Activated T-helper 2 cell treated with anti-CD3 and anti-CD28 coated beads, Interferon-gamma antibody, Interleukin-2, Interleukin-4, amounts not matched to agents 10 μg/mL and 5 μg/mL and 100 μg/mL, durations not matched to agents 14 hours and 24 hours and 36 hours (primary cell): ENCODE measurements at regions of chr16 and their contacts with region 1.

Region 1: DNA sequence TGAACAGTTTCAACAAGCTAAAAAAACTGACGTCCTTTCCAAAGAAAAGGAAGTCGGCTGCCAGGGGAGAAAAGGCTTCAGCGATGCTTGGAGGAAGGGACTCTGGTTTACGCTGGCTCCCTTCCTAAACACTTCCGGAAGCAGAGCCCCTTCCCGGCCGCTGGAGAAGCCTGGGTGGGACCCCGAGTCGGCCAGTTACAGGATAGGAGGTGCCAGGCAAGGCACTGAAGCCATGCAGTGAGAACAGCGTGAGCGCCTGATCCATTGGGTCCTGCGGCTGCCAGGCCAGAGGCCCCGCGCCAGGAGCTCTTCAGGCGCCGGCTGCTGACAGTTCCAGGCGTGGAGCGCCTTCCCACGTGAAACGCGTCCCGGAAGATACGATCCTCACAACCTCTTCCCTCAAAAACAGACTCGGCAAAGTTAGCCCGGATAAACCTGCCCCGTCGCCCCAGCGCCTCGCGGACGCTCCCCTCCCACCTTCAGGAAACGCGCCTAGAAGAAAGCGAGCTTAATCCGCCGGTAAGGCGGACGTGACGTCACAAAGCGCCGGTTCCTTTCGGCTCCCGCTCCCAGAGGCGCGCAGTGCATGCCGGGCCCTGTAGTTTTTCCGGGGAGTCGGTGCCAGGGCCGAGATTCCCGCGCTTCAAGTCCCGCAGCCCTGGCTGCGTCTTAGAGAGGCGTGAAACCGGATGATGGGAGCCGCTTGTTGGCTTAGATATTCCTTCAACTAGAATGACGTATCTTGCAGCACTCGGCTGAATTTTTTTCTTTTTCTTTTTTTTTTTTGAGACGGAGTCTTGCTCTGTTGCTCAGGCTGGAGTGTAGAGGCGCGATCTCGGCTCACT is at the start of gene ADAT1:
- DNase-seq: peak; percentile 96
- H3K4me3 Mint-ChIP-seq: peak within 1 kb of the TSS; percentile 93
- H3K27ac Mint-ChIP-seq: peak within 1 kb of the TSS; percentile 96
- H3K4me1 Mint-ChIP-seq: peaks cover 36% of the 10 kb centered on the region
- H3K27me3 Mint-ChIP-seq: no peaks in the 10 kb centered on the region
- total RNA-seq, gene ADAT1: 45.3 and 54.0 TPM in 2 replicates

Region 2: GRCh38 chr16:75432828-75433731 is 189.9 kb before region 1 on chr16 and contains the start of gene CFDP1:
- intact Hi-C with region 1: loop called (anchors 1 kb)
- DNase-seq: peak; percentile 93
- H3K4me3 Mint-ChIP-seq: peak within 1 kb of the TSS; percentile 87
- H3K27ac Mint-ChIP-seq: peak within 1 kb of the TSS; percentile 94
- H3K4me1 Mint-ChIP-seq: peaks cover 16% of the 10 kb centered on the region
- H3K27me3 Mint-ChIP-seq: no peaks in the 10 kb centered on the region
- total RNA-seq, gene CFDP1: 33.5 and 37.5 TPM in 2 replicates

Region 3: DNA sequence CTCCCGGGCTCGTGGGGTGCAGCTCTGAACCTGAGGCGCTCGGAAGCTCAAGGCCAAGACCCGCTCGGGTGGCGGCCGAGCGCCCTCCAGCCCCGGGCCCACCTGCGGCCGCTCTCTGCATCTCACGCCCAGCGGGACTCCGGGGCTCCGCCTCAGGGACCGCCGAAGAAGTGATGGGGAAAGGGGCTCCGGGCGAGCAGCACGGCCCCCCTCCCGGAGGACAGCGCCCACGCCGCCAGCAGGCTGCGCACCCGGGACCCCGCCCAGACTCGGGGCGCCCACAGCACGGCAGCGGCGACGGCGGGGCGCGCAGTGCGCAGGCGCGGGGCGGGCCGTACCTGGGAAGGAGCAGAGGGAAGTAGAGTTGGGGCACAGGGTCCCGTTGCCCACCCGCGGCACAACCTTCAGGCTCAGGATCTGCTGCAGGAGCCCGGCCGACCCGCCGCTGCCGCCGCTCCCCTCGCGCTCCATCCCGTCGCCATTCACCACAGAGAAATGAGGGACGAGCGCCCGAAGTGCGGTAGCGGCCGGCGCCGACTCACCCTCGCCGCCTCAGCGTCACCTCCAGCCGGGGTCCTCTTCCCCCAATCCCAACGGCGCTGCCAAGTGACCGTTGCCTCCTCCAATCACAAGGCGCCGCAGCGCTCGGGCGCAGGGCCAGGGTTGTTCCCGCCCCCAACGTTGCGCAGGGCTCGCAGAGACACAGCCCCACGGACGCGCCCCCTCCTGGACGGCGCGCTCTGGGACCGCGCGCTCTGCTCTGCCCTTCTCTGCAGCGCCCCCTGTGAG is 158.7 kb before region 1 on chr16 and contains the start of gene TMEM170A:
- intact Hi-C with region 1: loop called (anchors 2 kb)
- DNase-seq: peak; percentile 98
- H3K4me3 Mint-ChIP-seq: peak within 1 kb of the TSS; percentile 91
- H3K27ac Mint-ChIP-seq: peak within 1 kb of the TSS; percentile 89
- H3K4me1 Mint-ChIP-seq: peaks cover 36% of the 10 kb centered on the region
- H3K27me3 Mint-ChIP-seq: peaks cover 2% of the 10 kb centered on the region
- total RNA-seq, gene TMEM170A: 35.6 and 39.9 TPM in 2 replicates

Region 4: GRCh38 chr16:75495076-75495674 is 127.8 kb before region 1 on chr16 and contains the start of gene CHST6:
- intact Hi-C with region 1: no loop called
- DNase-seq: no peak
- H3K4me3 Mint-ChIP-seq: no peak within 1 kb of the TSS
- H3K27ac Mint-ChIP-seq: no peak within 1 kb of the TSS
- H3K4me1 Mint-ChIP-seq: peaks cover 2% of the 10 kb centered on the region
- H3K27me3 Mint-ChIP-seq: peaks cover 32% of the 10 kb centered on the region
- total RNA-seq, gene CHST6: not detected in 2 replicates

Region 5: GRCh38 chr16:75506107-75506506 is 116.9 kb before region 1 on chr16:
- intact Hi-C with region 1: no loop called
- DNase-seq: no peak
- H3K4me3 Mint-ChIP-seq: no peak overlapping the region
- H3K27ac Mint-ChIP-seq: no peak overlapping the region
- H3K4me1 Mint-ChIP-seq: peaks cover 3% of the 10 kb centered on the region
- H3K27me3 Mint-ChIP-seq: peaks cover 7% of the 10 kb centered on the region

Region 6: DNA sequence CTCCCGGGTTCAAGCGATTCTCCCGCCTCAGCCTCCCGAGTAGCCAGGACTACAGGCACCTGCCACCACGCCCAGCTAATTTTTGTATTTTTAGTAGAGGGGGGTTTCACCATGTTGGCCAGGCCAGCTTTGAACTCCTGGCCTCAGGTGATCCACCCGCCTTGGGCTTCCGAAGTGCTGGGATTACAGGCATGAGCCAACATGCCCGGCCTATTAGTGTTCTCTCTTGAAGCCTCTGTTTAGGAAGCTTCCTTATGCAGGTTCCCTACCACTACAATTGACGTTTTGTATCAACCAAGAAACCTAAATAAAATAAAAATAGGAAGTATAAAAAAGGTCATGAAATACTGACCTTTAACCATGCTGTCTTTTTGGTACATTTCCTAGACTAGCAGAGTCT is 103.1 kb before region 1 on chr16:
- intact Hi-C with region 1: loop called (anchors 2 kb)
- DNase-seq: no peak
- H3K4me3 Mint-ChIP-seq: no peak overlapping the region
- H3K27ac Mint-ChIP-seq: no peak overlapping the region
- H3K4me1 Mint-ChIP-seq: peaks cover 7% of the 10 kb centered on the region
- H3K27me3 Mint-ChIP-seq: peaks cover 7% of the 10 kb centered on the region

Region 7: DNA sequence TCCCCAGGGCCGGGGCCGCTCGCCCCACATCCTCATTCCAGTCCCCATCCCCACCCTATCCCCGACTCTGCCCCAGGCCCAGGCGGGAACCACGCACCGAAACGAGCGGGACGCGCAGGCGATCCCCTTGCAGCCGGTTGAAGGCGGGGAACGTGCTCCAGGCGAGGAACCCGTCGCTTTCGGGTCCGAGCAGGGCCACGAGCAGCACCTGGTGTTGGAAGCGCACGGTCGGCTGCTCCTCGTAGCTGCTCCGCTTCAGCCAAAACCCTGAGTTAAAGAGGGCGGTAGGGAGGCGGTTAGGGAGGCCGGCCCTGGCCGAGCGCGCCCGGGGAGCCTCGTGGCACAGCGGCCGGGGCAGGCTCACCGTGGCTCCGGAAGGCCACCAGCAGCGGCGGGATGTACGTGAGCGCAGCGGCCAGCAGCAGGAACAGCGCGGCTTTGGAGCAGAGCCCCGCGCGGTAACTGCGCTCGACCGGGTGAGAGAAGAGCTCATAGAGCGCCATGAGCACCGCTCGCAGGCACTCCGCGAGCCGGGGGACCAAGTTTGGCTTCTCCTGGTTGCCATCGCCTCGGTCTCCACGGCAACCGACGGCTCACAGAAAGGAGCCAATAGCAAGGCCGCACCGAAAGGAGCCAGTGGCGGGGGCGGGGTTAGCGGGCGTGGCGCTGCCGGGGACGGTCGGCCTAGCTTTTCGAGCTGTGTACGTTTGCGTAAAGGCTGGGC is 67.1 kb before region 1 on chr16 and contains the start of gene TMEM231:
- intact Hi-C with region 1: loop called (anchors 1 kb)
- DNase-seq: peak; percentile 94
- H3K4me3 Mint-ChIP-seq: peak within 1 kb of the TSS; percentile 90
- H3K27ac Mint-ChIP-seq: peak within 1 kb of the TSS; percentile 86
- H3K4me1 Mint-ChIP-seq: peaks cover 7% of the 10 kb centered on the region
- H3K27me3 Mint-ChIP-seq: peaks cover 26% of the 10 kb centered on the region
- total RNA-seq, gene TMEM231: 2.7 and 3.4 TPM in 2 replicates

Region 8: DNA sequence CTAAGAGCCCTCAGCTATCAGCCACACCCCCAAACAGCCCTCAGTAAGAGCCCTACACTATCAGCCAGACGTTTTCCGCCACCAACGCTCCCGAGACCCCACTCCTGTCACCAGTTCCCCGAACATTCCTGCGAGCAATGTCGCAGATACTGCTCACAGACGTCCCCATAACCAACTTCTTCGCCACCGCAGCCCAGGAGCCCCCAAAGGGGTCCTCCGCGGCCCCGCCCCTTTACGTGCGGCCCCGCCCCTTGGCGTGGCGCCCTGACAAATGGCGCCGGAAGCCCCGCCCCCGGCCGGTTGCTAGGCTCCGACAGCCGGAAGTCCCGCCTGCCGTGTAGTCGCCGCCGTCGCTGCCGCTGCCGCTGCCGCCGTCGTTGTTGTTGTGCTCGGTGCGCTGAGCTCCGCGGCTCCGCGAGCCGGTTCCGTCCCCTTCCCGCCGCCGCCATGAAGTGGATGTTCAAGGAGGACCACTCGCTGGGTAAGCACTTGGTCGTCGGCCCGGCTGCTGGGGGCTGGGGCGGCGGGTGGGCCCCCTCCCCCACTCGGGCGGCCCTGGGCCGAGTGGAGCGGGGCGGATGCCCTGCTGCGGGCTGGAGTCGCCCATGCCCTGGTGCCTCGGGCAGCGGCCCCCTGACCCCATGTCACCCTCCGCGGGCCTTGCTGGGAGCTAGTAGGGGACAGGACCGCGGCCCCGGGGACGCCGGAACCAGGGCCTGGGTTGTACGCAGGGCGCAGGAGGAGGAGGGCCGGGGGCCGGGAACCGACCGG is 56.8 kb before region 1 on chr16 and contains the start of gene GABARAPL2:
- intact Hi-C with region 1: loop called (anchors 1 kb)
- DNase-seq: peak; percentile 86
- H3K4me3 Mint-ChIP-seq: peak within 1 kb of the TSS; percentile 96
- H3K27ac Mint-ChIP-seq: peak within 1 kb of the TSS; percentile 90
- H3K4me1 Mint-ChIP-seq: peaks cover 25% of the 10 kb centered on the region
- H3K27me3 Mint-ChIP-seq: peaks cover 14% of the 10 kb centered on the region
- total RNA-seq, gene GABARAPL2: 69.2 and 69.4 TPM in 2 replicates

Region 9: GRCh38 chr16:75764154-75764768 is 141.3 kb after region 1 on chr16:
- intact Hi-C with region 1: loop called (anchors 2 kb)
- DNase-seq: peak; percentile 33
- H3K4me3 Mint-ChIP-seq: no peak overlapping the region
- H3K27ac Mint-ChIP-seq: no peak overlapping the region
- H3K4me1 Mint-ChIP-seq: peaks cover 5% of the 10 kb centered on the region
- H3K27me3 Mint-ChIP-seq: peaks cover 6% of the 10 kb centered on the region

Region 10: GRCh38 chr16:75780669-75781068 is 157.7 kb after region 1 on chr16:
- intact Hi-C with region 1: no loop called
- DNase-seq: no peak
- H3K4me3 Mint-ChIP-seq: no peak overlapping the region
- H3K27ac Mint-ChIP-seq: no peak overlapping the region
- H3K4me1 Mint-ChIP-seq: no peaks in the 10 kb centered on the region
- H3K27me3 Mint-ChIP-seq: peaks cover 14% of the 10 kb centered on the region

Region 11: DNA sequence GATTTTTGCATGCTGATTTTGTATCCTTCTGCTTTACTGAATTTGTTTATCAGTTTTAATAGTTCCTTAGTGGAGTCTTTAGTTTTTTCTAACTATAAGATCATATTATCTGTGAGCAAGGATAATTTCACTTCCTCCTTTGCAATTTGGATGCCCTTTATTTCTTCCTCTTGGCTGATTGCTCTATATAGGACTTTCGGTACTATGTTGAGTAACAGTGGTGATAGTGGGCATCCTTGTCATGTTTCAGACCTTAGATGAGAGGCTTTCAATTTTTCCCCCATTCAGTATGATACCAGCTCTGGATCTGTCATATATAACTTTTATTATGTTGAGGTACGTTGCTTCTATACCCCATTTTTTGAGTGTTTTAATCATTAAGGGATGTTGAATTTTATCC is 429.7 kb after region 1 on chr16:
- intact Hi-C with region 1: no loop called
- DNase-seq: no peak
- H3K4me3 Mint-ChIP-seq: no peak overlapping the region
- H3K27ac Mint-ChIP-seq: no peak overlapping the region
- H3K4me1 Mint-ChIP-seq: no peaks in the 10 kb centered on the region
- H3K27me3 Mint-ChIP-seq: no peaks in the 10 kb centered on the region